A549 (cell line): ENCODE measurements at regions of chr20 and their contacts with region 1.

Region 1: GRCh38 chr20:62386383-62387218 is at the start of gene RPS21:
- DNase-seq: peak in 1 of 2 experiments; percentile 93
- ATAC-seq: peak; percentile 78 to 87
- H3K4me3 ChIP-seq: peak within 1 kb of the TSS; percentile 94
- H3K27ac ChIP-seq: peak within 1 kb of the TSS; percentile 88 to 97
- H3K4me1 ChIP-seq: peaks cover 33% of the 10 kb centered on the region
- CTCF ChIP-seq: no peak
- EP300 ChIP-seq: no peak
- POLR2A ChIP-seq: peak; percentile 77
- RAD21 ChIP-seq: 0 out of 5 replicates have a peak, but pooled peaks of 1 of the 2 experiments have one; percentile 13
- polyA plus RNA-seq, gene RPS21: 3,697 and 4,026 TPM in 2 replicates

Region 2: DNA sequence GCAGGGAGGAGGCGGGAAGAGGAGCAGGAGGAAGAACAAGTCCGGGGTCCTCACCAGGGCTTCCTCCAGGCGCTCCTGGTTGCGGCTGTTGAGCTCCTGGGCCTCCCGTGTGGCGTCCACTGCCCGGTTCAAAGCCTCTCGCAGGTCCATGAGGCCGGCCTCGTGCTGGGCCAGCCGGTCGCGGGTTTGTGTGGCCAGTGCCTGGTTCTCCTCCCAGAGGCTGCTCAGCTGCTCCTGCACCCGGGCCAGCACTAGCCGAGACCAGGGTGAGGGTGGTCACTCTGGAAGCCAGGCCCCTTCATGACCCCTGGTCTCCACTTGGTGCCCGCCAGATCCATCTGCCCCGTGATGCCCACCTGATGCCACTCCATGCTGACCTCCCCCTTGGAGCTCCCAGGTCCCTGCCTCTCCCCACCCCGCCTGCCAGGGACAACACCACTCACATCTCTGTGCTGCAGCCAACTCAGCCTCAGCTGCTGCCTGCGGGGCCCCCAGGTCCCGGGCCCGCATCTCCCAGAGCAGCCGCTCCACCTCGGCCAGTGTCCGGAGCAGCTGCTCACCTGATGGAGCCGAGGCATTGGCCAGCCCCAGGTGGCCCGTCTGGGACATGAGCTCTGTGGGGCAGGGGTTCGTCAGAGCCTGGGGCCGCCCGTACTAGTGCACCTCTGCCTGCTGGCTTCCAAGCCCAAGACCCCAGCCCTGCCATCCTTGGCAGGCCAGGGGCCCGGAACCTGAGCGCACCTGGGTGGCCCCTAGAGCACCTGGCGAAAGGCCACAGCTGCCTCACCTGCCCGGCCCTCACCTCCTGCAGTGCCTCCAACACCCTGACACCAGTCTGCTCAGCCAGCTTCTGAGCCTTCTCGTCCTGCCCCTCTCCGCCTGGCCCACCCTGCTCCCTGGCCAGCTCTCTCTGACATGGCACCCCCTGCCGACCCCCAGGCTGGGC is 67.9 kb before region 1 on chr20:
- CTCF ChIA-PET with region 1: interaction called, 29 read pairs
- POLR2A ChIA-PET with region 1: no interaction called
- DNase-seq: peak in 1 of 2 experiments; percentile 58
- ATAC-seq: peak; percentile 14 to 29; a peak in 5 of 6 replicates
- H3K4me3 ChIP-seq: no peak overlapping the region
- H3K27ac ChIP-seq: peak overlapping the region in 1 of 2 experiments; percentile 70; a peak in 2 of 6 replicates
- H3K4me1 ChIP-seq: peaks cover 11% of the 10 kb centered on the region; the same call in 2 of the 3 replicates
- CTCF ChIP-seq: no peak
- EP300 ChIP-seq: no peak
- POLR2A ChIP-seq: no peak
- RAD21 ChIP-seq: no peak

Region 3: DNA sequence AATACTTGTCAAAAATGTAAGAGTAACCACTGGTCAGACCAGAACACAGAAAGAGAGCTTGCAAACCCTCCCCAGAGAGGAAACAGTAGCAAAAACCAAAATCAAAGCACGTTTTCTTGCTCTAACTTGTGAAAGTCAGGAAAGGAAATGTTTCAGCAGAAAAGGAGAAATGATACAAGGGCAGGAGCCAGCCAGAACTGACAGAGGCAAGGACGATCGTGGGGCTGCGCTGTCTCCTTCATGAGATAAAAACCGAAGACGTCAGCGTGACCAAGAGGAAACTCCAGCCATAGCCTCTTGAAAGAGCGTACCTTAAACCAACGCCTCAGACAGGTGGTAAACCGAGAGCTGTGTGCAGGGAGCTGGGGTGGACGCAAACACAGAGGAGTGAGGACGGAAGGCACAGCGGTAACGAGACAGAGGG is 46.9 kb before region 1 on chr20:
- CTCF ChIA-PET with region 1: interaction called, 17 read pairs
- POLR2A ChIA-PET with region 1: interaction called, 7 read pairs
- DNase-seq: no peak
- ATAC-seq: no peak
- H3K4me3 ChIP-seq: no peak overlapping the region
- H3K27ac ChIP-seq: no peak overlapping the region
- H3K4me1 ChIP-seq: no peaks in the 10 kb centered on the region; the same call in 2 of the 3 replicates
- CTCF ChIP-seq: no peak
- EP300 ChIP-seq: no peak
- POLR2A ChIP-seq: no peak
- RAD21 ChIP-seq: no peak

Region 4: DNA sequence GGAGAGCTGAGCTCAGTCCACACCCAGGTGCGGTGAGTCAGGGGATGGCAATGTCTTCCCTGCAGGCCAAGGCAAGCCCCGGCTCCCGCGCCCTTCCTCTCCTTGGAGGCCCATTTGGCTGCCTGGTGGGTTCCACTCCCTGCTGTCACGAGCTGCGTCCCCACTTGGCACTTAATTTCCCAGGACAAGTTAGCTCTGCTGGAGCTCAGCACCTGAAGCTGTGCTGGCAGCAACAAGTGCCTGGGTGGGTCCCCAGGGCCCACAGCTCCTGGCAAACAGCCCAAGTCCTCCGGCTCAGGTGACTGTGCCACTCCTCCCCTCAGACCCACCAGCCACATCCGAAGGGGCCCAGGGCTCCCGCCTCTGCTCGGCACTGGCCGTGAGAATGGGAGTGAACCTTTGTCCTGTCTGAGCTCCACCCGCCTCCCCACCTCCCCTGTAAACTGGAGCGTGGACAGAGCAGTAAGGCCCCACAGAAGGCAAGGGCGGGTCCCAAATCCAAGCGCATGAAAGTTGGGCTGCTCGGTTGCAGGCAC is 36.4 kb before region 1 on chr20:
- CTCF ChIA-PET with region 1: interaction called, 42 read pairs
- POLR2A ChIA-PET with region 1: interaction called, 10 read pairs
- DNase-seq: peak; percentile 52 to 93
- ATAC-seq: peak; percentile 59 to 62
- H3K4me3 ChIP-seq: no peak overlapping the region
- H3K27ac ChIP-seq: peak overlapping the region; percentile 97 to 99
- H3K4me1 ChIP-seq: peaks cover 55% of the 10 kb centered on the region
- CTCF ChIP-seq: no peak
- EP300 ChIP-seq: peak; percentile 41 to 49; a peak in 1 of 5 replicates
- POLR2A ChIP-seq: no peak
- RAD21 ChIP-seq: peak; percentile 3 to 10; a peak in 1 of 5 replicates

Region 5: DNA sequence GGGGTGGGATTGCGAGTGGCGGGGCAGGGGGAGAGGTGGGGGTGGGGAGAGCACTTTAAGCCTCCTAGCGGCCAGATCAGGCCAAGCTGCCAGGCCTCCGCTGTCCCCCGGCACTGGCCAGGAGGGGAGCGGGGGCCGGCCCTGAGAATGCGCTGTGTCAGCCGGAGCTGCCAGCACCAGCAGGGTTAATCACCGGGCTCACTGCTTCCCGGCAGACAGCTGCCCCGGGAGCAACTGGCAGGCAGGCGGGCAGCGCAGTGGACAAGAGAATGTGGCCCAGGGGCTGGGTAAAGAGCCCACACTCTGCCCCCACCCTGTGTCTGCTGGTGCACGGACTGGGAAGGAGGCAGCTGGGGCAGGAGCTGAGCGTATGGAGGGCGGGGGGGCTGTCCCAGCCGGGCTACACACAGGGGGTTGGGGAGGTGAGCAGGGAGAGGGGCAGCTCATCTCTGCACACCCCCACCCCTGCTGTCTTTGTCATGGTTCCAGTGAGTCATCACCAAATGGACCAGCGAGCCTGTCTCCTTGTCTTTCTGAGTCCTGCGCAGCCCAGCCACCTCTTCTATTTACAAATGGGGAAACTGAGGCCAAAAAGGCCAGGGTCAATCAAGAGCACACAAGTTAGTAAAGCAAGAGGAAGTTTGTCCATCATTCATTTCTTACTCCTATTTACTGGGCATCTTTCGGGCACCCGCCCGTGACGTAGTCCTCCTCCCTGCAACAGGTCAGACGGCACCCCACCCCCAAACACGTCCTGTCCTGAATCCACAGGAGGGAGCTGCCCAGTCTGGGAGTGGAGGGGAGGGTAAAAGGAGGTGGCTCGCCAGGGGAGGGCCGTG is 17.4 kb before region 1 on chr20:
- CTCF ChIA-PET with region 1: interaction called, 290 read pairs
- POLR2A ChIA-PET with region 1: interaction called, 18 read pairs
- DNase-seq: peak in 1 of 2 experiments; percentile 89
- ATAC-seq: peak; percentile 48 to 68
- H3K4me3 ChIP-seq: peak overlapping the region; percentile 100
- H3K27ac ChIP-seq: peak overlapping the region; percentile 97 to 99
- H3K4me1 ChIP-seq: peaks cover 49% of the 10 kb centered on the region
- CTCF ChIP-seq: peak; percentile 29; the same call in 2 of the 3 replicates
- EP300 ChIP-seq: peak; percentile 35 to 44; a peak in 2 of 5 replicates
- POLR2A ChIP-seq: peak; percentile 60
- RAD21 ChIP-seq: peak in 1 of 2 experiments; percentile 2; a peak in 2 of 5 replicates

Region 6: DNA sequence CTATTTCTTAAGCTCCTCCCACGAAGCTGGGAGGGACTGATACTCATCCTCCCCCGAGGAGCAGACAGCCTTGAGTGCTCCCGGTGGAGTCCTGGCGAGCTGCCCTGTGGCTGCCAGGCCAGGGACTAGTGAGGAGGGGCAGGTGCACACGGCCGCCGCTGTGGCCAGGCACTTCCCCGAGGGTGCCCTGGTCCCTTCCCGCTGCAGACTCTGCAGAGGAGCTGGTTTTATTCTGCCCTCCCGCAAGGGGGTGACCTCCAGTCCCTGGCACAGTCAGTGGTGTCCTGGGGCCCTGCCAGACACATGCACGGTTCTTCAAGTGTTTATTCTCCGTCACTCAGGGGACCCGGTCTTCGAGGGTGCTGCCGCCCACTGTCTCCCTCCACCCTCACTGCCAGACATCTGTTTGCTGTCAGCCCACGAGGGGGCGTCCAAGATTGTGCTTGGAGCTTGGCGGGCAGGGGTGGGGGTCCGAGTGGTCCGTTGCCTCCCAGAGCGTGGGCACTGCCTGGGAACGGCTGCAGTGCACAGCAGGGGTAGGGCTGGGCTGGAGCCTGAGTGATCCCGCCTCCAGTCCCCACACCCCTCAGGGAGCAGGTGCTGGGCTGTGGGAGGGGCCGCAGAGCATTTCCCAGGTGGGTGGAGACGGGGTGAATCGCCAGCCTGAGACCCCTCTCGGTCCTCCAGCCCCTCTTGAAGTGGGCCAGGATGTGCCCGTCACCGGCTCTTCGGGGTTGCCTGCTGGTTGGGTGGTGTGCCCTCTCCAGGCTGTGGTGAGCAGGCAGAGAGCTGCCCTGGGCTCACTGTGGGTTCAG is 23.5 kb after region 1 on chr20:
- CTCF ChIA-PET with region 1: interaction called, 14 read pairs
- POLR2A ChIA-PET with region 1: no interaction called
- DNase-seq: peak; percentile 49 to 51
- ATAC-seq: peak; percentile 27 to 47; a peak in 5 of 6 replicates
- H3K4me3 ChIP-seq: 0 out of 3 replicates have a peak overlapping the region, but pooled peaks have one; percentile 7
- H3K27ac ChIP-seq: peak overlapping the region in 1 of 2 experiments; percentile 30; a peak in 2 of 6 replicates
- H3K4me1 ChIP-seq: peaks cover 21% of the 10 kb centered on the region
- CTCF ChIP-seq: peak; percentile 61
- EP300 ChIP-seq: no peak
- POLR2A ChIP-seq: no peak
- RAD21 ChIP-seq: peak; percentile 56 to 64

Region 7: DNA sequence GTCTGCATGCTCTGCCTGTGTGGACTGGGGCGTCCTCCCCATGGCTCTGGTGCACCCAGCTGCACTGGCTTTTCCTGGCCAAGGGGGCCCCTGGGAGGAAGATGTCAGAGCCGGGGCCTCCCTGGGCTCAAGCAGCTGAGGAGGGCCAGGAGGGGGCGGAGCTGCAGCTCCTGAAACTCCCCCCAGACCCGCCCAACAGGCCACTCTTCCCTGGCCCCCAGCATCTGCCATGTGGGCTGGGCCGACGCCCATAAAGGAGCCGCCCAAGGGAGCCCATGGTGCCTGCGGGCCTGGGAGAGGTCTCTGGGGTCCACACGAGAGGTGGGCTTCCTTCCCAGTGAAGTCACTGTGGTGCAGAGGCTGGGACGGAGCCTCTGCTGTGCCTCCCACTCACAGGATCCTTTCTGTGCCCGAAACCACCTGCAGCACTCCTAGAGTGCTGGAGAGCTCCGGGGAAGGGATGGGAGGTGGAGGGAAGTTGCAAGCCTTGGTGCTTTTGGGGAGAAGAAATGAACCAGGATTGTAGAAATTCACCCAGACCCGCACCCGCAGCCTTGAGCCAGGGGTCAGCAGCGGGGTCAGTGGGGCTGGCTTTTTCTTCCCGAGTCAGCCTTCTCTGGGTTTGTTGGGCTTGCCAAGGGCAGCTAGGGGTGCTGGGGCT is 36.9 kb after region 1 on chr20:
- CTCF ChIA-PET with region 1: no interaction called
- POLR2A ChIA-PET with region 1: no interaction called
- DNase-seq: no peak
- ATAC-seq: peak in 1 of 2 experiments; percentile 18; a peak in 2 of 6 replicates
- H3K4me3 ChIP-seq: no peak overlapping the region
- H3K27ac ChIP-seq: no peak overlapping the region
- H3K4me1 ChIP-seq: no peaks in the 10 kb centered on the region
- CTCF ChIP-seq: no peak
- EP300 ChIP-seq: no peak
- POLR2A ChIP-seq: no peak
- RAD21 ChIP-seq: no peak